Dendritic cell treated with granulocyte-macrophage colony-stimulating factor and Interleukin-4, amounts not matched to agents 40 ng/mL and 50 ng/mL, for 4 days (primary cell): ENCODE measurements at regions of chr19 and their contacts with region 1.

Region 1: GRCh38 chr19:47124937-47125668 is 5.5 kb upstream of the SAE1 start:
- H3K4me3 Mint-ChIP-seq: no peak overlapping the region
- H3K27ac Mint-ChIP-seq: no peak overlapping the region
- H3K4me1 Mint-ChIP-seq: peaks cover 5% of the 10 kb centered on the region
- H3K27me3 Mint-ChIP-seq: peaks cover 7% of the 10 kb centered on the region

Region 2: DNA sequence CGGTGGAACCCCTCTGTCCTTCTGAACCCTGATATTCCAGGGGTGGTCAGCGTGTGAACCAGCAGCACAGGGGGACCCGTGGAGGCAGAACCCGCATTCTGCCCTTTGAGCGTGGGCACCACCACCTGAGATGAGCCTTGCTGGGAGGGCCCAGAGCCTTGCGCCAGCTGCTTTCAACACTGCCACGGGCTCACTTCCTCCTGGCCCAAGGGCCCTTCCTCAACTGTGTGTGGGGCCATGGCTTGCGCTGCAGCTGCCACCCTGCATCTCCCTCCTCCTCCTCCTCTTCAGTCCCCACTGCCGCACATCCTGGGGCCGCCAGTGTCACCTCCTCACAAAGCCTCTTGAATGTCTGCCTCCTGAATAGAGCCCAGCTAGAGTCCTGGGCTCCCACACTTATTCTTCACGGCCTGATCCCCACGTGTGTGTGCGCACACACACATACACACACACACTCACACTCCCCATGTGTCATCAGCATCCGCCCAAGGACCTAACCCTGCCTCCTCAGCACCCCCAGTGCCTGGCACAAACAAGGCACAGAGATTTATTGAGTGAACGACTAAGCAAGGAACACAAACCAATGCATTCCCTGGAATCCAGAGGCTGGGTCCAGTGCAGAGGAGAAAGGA is 49.8 kb before region 1 on chr19:
- intact Hi-C with region 1: loop called (anchors 1 kb)
- H3K4me3 Mint-ChIP-seq: no peak overlapping the region
- H3K27ac Mint-ChIP-seq: peak overlapping the region; percentile 73
- H3K4me1 Mint-ChIP-seq: peaks cover 22% of the 10 kb centered on the region
- H3K27me3 Mint-ChIP-seq: no peaks in the 10 kb centered on the region

Region 3: DNA sequence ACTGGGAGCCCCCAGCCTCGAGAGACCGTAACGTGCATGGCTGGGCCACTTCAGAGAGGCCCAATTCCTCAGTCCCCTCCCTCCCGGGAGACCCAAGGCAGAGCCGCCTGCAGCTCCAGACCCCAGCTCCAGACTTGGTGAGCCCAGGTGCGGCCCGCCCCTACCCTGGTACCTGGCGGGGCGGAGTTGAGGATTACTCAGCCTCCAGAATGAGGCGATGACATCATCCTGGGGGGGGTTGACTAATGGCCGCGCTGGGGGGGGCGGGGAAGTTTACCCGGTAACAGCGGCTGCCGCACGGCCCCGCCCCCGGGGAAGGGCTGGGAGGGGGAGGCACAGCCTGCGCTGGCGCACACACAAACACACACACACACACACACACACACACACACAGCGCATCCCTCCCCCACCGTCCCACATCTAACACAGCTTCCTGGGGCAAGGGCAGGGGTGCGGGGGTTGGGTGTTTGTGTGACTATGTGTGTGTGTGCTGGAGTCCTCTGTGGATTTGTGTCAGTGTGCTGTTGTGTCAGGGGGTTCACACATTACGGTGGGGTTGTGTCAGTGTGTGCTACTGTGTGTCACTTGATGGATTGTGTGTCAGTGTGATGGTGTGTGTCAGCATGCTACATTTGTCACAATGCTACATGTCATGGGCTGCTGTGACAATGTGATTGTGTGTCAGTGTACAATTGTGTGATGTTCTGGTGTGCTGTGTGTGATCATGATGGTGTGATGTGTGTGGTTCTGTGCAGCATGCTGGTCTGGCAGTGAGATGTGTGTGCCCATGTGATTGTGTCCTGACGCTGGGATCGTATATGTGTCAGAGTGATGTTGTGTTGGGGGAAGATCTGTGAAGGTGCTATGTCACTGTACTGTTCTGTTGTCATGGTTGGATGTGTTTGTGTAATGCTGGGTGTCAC is 116.2 kb after region 1 on chr19:
- intact Hi-C with region 1: no loop called
- H3K4me3 Mint-ChIP-seq: no peak overlapping the region
- H3K27ac Mint-ChIP-seq: no peak overlapping the region
- H3K4me1 Mint-ChIP-seq: peaks cover 12% of the 10 kb centered on the region
- H3K27me3 Mint-ChIP-seq: peaks cover 47% of the 10 kb centered on the region